Activated CD4-positive, alpha-beta T cell treated with anti-CD3 and anti-CD28 coated beads, Interleukin-2, amount 10 ng/mL, durations not matched to agents 24 days and 14 days (primary cell): ENCODE measurements at regions of chr4 and their contacts with region 1.

Region 1: GRCh38 chr4:122764821-122765215 is 32.3 kb downstream of the BBS12 start:
- DNase-seq: no peak
- H3K4me3 Mint-ChIP-seq: peak overlapping the region; percentile 49
- H3K27ac Mint-ChIP-seq: peak overlapping the region; percentile 81
- H3K4me1 Mint-ChIP-seq: peaks cover 33% of the 10 kb centered on the region
- H3K27me3 Mint-ChIP-seq: no peaks in the 10 kb centered on the region

Region 2: GRCh38 chr4:122131562-122132157 is 633.2 kb before region 1 on chr4:
- intact Hi-C with region 1: no loop called
- DNase-seq: peak; percentile 79
- H3K4me3 Mint-ChIP-seq: peak overlapping the region; percentile 52
- H3K27ac Mint-ChIP-seq: peak overlapping the region; percentile 70
- H3K4me1 Mint-ChIP-seq: peaks cover 20% of the 10 kb centered on the region
- H3K27me3 Mint-ChIP-seq: no peaks in the 10 kb centered on the region

Region 3: GRCh38 chr4:122747883-122748282 is 16.9 kb before region 1 on chr4:
- intact Hi-C with region 1: loop called (anchors 2 kb)
- DNase-seq: no peak
- H3K4me3 Mint-ChIP-seq: no peak overlapping the region
- H3K27ac Mint-ChIP-seq: no peak overlapping the region
- H3K4me1 Mint-ChIP-seq: peaks cover 18% of the 10 kb centered on the region
- H3K27me3 Mint-ChIP-seq: peaks cover 18% of the 10 kb centered on the region

Region 4: DNA sequence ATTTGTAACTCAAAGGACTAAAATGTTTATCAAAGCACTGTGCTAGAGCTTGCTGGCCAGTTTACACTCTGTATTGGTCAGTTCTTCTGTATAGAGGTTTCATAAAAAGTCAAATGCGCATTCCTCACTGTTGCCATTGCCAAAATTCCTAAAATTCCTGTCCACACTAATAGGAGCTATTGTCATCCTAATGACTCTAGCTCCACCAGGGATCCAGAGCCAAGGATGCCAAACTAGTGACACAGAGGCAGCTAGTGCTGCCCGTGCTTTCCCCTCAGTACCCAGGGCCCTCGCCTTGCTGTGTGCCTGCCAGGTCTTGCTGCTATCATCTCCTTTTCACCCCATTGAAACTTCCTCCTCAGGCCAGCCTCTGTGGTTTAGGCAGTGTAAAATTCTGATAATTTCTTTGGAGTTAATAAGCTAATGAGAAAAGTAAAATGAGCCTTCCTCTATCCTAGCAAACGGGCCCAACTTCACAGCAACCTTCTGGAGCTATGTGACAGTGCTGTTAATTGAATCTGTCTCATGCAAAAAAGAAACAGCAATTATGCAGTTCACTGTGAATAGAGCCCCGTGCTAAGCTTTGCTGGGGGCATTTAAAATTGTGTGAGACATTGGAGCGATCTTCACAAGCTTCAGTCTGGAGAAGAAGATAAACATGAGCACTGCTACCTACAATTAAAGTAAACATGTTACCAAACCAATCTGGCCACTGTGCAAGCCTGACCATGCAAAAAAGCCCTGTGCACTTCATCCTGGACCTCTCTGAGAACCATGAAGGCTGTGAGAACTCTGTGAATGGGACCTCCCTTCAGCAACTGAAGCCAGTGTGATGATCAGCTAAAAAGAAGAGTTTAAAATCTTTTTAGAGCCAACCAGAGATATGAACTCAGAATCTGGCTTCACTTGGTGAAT is 18.7 kb after region 1 on chr4:
- intact Hi-C with region 1: loop called (anchors 1 kb)
- DNase-seq: peak; percentile 52
- H3K4me3 Mint-ChIP-seq: no peak overlapping the region
- H3K27ac Mint-ChIP-seq: no peak overlapping the region
- H3K4me1 Mint-ChIP-seq: peaks cover 23% of the 10 kb centered on the region
- H3K27me3 Mint-ChIP-seq: no peaks in the 10 kb centered on the region

Region 5: DNA sequence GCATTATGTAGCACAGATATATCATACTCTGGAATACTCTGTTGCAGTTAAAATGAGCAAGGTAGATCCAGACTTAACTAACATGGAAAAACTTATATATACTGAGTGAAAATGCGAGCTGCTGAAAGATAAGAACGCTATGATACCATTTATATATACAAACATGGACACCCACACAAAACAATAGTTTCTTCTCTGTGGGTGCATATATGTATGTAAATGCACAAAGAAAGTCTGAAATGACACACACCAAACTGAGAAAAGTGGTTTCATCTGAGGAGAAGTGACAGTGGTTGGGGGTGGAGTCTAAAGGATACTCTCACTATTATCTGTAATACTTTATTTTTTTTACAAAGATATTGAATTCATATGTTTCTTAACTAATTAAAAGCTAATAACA is 49.6 kb after region 1 on chr4:
- intact Hi-C with region 1: loop called (anchors 1 kb)
- DNase-seq: no peak
- H3K4me3 Mint-ChIP-seq: no peak overlapping the region
- H3K27ac Mint-ChIP-seq: peak overlapping the region; percentile 70
- H3K4me1 Mint-ChIP-seq: peaks cover 10% of the 10 kb centered on the region
- H3K27me3 Mint-ChIP-seq: peaks cover 9% of the 10 kb centered on the region

Region 6: GRCh38 chr4:122963216-122963615 is 198.4 kb after region 1 on chr4:
- intact Hi-C with region 1: no loop called
- DNase-seq: no peak
- H3K4me3 Mint-ChIP-seq: no peak overlapping the region
- H3K27ac Mint-ChIP-seq: no peak overlapping the region
- H3K4me1 Mint-ChIP-seq: peaks cover 12% of the 10 kb centered on the region
- H3K27me3 Mint-ChIP-seq: no peaks in the 10 kb centered on the region